ENCODE measurements at regions of chr11 and their contacts with region 1.

Region 1: DNA sequence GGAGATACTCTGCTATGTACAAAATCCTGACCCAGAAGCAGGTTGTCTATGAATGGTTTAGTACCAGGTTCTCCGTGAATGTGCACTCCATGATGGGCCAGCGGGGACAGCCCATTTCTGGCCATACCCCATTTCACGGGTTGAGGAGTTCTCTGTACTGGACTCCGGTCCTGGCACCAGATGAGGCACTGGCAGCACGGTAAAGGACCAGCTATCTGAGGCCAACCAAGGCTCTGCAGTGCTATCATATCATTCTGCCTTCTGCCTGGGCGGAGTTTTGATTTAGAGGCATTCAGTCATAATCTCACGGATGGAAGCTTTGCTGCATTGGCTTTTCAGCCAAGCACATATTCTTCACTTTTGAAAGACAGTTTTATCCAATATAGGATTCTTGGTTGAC is 18.5 kb upstream of the KMT5B start:
- DNase-seq: no peak
- H3K4me3 ChIP-seq: no peak overlapping the region
- CTCF ChIP-seq: no peak

Region 2: DNA sequence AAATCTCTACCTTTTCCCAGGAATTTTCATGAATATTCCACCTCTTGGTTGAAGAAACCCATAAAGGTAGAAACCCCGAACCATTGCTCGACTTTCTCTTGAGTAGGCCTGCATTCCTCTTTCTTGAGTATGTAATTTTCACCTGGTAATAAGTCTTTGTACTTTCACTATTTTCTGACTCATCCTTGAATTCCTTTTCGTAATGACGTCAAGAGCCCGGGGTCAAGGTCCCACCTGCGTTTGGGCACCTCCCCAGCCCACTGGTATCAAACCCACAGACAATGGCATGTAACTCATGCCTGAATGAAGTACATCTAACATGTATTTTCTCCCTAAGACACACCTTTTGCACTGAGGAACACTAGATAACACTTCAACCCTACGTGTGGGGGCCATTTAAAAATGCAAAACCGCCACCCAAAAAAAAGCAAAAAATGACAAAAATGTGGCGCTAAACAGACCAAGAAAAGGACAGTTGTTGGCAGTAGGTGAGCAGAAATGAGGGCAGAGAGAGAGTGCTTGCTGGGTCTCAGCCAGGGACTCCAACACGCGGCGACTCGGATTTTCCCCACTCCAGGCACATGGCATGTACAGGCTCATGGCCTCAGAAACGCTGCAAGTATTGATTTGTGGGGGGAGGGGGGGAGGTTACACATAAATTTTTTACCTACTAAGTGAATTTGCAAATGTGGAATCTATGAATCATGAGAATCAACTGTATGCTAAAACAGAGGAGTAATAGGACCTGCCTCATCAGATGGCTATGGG is 44.3 kb after region 1 on chr11:
- in situ Hi-C with region 1: loop called (anchors 5 kb)
- DNase-seq: no peak
- H3K4me3 ChIP-seq: no peak overlapping the region
- CTCF ChIP-seq: no peak